B cell (primary cell): ENCODE measurements at regions of chr15 and their contacts with region 1.

Region 1: DNA sequence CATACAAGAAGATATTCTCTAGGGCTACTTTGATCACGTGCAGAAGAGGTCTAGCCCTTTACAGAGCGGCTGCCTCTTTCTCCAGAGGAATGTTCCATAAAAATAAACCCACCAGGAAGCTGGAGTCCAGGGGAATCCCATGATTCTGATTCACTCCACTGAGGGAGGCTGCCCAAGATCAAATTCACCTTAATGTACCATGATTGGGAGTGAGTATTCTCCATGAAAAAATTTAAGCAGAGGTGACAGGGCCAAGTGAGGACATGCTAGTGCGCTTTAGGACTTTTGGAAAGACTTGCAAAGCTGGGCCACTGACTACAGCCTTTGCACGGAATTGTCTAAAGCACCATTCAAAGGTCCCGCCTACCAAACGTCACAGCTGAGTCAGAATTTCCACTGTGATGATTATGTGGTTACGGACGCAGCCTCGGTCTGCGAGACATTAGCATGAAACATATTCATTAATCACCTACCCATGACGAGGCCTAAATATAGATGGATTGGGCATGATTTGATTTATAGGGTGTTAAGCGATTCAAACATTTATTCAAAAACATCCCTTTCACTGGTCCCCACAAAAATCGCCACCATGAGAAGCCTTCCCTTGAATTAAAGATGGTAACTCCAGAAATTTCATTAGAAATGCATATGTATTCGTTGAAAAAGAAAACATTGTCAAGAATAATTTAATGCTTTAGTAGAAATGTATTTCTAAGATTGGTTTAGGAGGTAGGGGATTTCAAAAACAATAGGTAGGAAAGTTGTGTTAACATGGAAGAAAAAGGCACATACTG is 152.6 kb downstream of the GREM1 start:
- DNase-seq: peak; percentile 67
- ATAC-seq: peak; percentile 92
- H3K4me3 ChIP-seq: no peak overlapping the region
- H3K4me3 Mint-ChIP-seq: peak overlapping the region; percentile 32
- H3K27ac ChIP-seq: no peak overlapping the region
- H3K27ac Mint-ChIP-seq: peak overlapping the region; percentile 73
- H3K4me1 ChIP-seq: peaks cover 0 to 3% of the 10 kb centered on the region in 2 donors
- H3K4me1 Mint-ChIP-seq: peaks cover 19% of the 10 kb centered on the region
- H3K27me3 ChIP-seq: no peaks in the 10 kb centered on the region
- H3K27me3 Mint-ChIP-seq: no peaks in the 10 kb centered on the region
- CTCF ChIP-seq: no peak

Region 2: DNA sequence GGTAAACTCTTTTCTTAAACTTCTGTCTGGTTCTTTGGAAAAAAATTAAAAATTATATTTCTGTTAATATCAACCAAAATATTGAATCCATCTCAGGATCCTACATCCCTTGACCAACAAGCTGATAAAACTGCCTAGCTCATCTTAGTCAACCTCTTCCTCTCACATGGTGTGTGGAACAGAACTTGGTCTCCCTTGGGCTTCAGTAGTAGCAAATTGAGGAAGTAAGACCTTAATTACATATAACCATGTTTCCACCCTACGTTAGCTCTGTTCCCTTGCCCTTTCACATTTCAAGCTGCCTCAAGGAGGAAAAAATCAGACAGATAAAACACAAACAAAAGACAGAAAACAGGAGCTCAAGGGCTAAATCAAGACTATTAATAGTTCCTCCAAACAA is 36.3 kb before region 1 on chr15:
- CTCF ChIA-PET with region 1: interaction called, 3 read pairs
- POLR2A ChIA-PET with region 1: no interaction called
- intact Hi-C with region 1: loop called (anchors 5 kb)
- DNase-seq: peak; percentile 63
- ATAC-seq: peak; percentile 99
- H3K4me3 ChIP-seq: no peak overlapping the region
- H3K4me3 Mint-ChIP-seq: peak overlapping the region; percentile 33
- H3K27ac ChIP-seq: no peak overlapping the region
- H3K27ac Mint-ChIP-seq: peak overlapping the region; percentile 12
- H3K4me1 ChIP-seq: peaks cover 10 to 13% of the 10 kb centered on the region in 2 donors
- H3K4me1 Mint-ChIP-seq: peaks cover 16% of the 10 kb centered on the region
- H3K27me3 ChIP-seq: peaks cover 0 to 3% (median 1%) of the 10 kb centered on the region in 4 experiments
- H3K27me3 Mint-ChIP-seq: peaks cover 21% of the 10 kb centered on the region
- CTCF ChIP-seq: no peak